Transverse colon (tissue), 4 donors: ENCODE measurements at regions of chr14 and their contacts with region 1.

Region 1: GRCh38 chr14:53715193-53715721 is 241.4 kb downstream of the BMP4 start:
- DNase-seq: no peak
- H3K4me3 ChIP-seq: no peak overlapping the region
- H3K27ac ChIP-seq: peak overlapping the region in 3 of 4 donors; percentile 1 to 53 (median 23)
- H3K4me1 ChIP-seq: peaks cover 0 to 11% (median 0%) of the 10 kb centered on the region in 4 donors
- H3K27me3 ChIP-seq: no peaks in the 10 kb centered on the region
- CTCF ChIP-seq: no peak
- EP300 ChIP-seq: no peak
- POLR2A ChIP-seq: no peak

Region 2: GRCh38 chr14:53683229-53683628 is 32.0 kb before region 1 on chr14:
- in situ Hi-C with region 1: no loop called
- intact Hi-C with region 1: loop called (anchors 2 kb)
- DNase-seq: no peak
- H3K4me3 ChIP-seq: no peak overlapping the region
- H3K27ac ChIP-seq: no peak overlapping the region
- H3K4me1 ChIP-seq: no peaks in the 10 kb centered on the region
- H3K27me3 ChIP-seq: no peaks in the 10 kb centered on the region
- CTCF ChIP-seq: no peak
- EP300 ChIP-seq: no peak
- POLR2A ChIP-seq: no peak